ENCODE measurements at regions of chr13 and their contacts with region 1.

Region 1: GRCh38 chr13:48244159-48244558 is 11.2 kb downstream of the ITM2B start:
- DNase-seq: no peak
- ATAC-seq: no peak
- H3K4me3 ChIP-seq: no peak overlapping the region
- H3K4me3 Mint-ChIP-seq: no peak overlapping the region
- H3K27ac ChIP-seq: peak overlapping the region in 1 of 2 experiments; percentile 20
- H3K27ac Mint-ChIP-seq: peak overlapping the region; percentile 9
- H3K4me1 ChIP-seq: peaks cover 74% of the 10 kb centered on the region
- H3K4me1 Mint-ChIP-seq: peaks cover 80% of the 10 kb centered on the region
- H3K27me3 ChIP-seq: no peaks in the 10 kb centered on the region
- H3K27me3 Mint-ChIP-seq: no peaks in the 10 kb centered on the region
- CTCF ChIP-seq: no peak

Region 2: DNA sequence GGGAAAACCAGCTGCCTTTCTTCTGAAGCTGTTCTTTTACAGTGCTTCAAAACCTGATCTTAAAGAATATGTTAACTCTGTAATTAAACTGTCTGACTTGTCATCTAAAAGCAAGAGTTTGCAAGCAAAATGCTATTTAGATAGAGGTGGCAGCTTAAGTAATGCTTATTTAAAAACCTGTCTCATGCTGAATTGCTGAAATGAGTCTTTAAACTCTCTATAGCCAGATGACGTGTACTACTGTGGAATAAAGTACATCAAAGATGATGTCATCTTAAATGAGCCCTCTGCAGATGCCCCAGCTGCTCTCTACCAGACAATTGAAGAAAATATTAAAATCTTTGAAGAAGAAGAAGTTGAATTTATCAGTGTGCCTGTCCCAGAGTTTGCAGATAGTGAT is 11.8 kb after region 1 on chr13:
- CTCF ChIA-PET with region 1: no interaction called
- POLR2A ChIA-PET with region 1: interaction called, 4 read pairs
- intact Hi-C with region 1: loop called in 1 of 2 experiments (anchors 2 kb)
- DNase-seq: no peak
- ATAC-seq: peak; percentile 40
- H3K4me3 ChIP-seq: no peak overlapping the region
- H3K4me3 Mint-ChIP-seq: no peak overlapping the region
- H3K27ac ChIP-seq: no peak overlapping the region
- H3K27ac Mint-ChIP-seq: peak overlapping the region; percentile 53
- H3K4me1 ChIP-seq: peaks cover 35% of the 10 kb centered on the region
- H3K4me1 Mint-ChIP-seq: peaks cover 79% of the 10 kb centered on the region
- H3K27me3 ChIP-seq: no peaks in the 10 kb centered on the region
- H3K27me3 Mint-ChIP-seq: no peaks in the 10 kb centered on the region
- CTCF ChIP-seq: no peak

Measured in CD8-positive, alpha-beta T cell (primary cell).